HEK293 (cell line): ENCODE measurements at regions of chr1 and their contacts with region 1.

Region 1: DNA sequence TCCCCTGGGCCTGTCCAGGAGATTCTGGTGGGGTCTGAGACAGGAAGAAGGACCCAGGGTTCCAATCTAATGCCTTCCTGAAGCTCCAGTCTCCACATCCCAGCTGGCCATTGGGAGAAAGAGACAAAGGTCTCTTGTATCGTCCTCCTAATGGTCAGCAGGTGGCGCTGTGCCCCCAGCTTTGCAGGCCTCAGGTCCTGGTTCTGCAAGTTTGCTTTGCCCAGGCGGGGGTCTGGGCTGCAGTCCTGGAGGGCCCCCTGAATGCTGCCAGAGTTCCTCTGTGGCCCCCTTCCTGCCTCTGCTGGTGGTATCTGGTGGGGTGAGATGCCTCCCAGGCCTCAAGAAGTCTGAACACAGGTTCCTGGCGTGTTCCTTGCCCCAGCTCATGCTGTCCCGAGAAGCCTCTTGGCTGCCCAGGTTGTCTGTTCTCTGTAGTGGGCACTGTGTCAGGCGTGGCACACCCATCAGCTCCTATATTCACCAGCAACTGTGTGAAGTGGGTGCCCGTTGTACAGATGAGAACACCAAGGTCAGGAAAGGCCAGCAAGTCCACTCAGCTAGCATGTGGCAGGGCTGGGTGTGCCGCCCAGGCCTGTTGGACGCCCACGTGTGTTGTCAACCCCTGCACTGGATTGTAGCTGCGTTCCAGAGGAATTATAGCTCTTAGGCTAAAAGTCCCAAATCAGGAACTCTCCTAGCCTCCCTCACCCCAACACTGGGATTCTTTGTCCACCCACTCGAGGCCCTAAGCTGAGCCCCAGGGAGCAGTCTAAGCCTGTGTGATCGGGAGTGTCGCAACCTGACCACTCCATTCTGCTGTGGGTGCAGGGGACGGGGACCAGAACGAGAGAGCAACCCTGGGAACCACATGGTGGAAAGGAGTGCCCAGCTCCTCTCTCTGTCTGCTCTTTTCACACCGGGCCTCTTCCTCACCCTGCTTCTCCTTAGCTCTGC is 33.9 kb upstream of the CSF3R start:
- H3K4me3 ChIP-seq: no peak overlapping the region
- H3K27ac ChIP-seq: no peak overlapping the region
- H3K4me1 ChIP-seq: no peaks in the 10 kb centered on the region
- CTCF ChIP-seq: peak; percentile 85

Region 2: GRCh38 chr1:36322796-36323596 is 193.7 kb before region 1 on chr1:
- CTCF ChIA-PET with region 1: no interaction called
- POLR2A ChIA-PET with region 1: no interaction called
- H3K4me3 ChIP-seq: peak overlapping the region; percentile 53
- H3K27ac ChIP-seq: peak overlapping the region; percentile 58; the same call in 1 of the 2 replicates
- H3K4me1 ChIP-seq: no peaks in the 10 kb centered on the region; the same call in 1 of the 2 replicates
- CTCF ChIP-seq: no peak

Region 3: GRCh38 chr1:36479505-36480051 is 37.1 kb before region 1 on chr1:
- CTCF ChIA-PET with region 1: interaction called, 11 read pairs
- POLR2A ChIA-PET with region 1: no interaction called
- H3K4me3 ChIP-seq: no peak overlapping the region
- H3K27ac ChIP-seq: no peak overlapping the region
- H3K4me1 ChIP-seq: no peaks in the 10 kb centered on the region
- CTCF ChIP-seq: no peak

Region 4: GRCh38 chr1:36506276-36506920 is 10.3 kb before region 1 on chr1:
- CTCF ChIA-PET with region 1: interaction called, 17 read pairs
- POLR2A ChIA-PET with region 1: no interaction called
- H3K4me3 ChIP-seq: no peak overlapping the region
- H3K27ac ChIP-seq: no peak overlapping the region
- H3K4me1 ChIP-seq: no peaks in the 10 kb centered on the region
- CTCF ChIP-seq: no peak

Region 5: DNA sequence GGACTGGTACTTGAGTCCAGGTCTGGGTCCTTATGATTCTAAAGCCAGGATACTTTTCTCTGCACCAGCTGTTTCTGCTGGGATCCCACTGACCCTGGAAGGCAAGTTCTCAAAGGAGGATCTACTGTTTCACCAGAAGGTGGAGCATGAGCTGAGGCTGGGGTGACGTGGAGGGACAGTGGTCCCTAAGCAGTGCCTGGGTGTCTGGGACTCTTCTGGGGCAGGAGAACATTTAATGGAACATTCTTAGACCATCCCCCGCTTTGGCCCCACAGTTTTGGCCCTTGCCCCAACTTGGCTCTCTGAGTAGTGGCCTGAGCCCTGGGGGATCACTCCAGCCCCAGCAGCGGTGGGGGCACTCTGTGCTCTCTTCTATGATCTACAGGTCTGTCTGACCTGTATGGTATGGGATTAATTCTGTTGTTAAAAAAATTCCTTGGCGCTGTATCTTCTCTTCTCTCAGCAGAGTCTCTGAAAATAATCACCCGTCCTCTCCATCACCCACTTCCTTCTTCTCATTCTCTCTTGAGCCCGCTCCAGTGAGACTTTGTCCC is 26.4 kb after region 1 on chr1:
- CTCF ChIA-PET with region 1: interaction called, 26 read pairs
- POLR2A ChIA-PET with region 1: no interaction called
- H3K4me3 ChIP-seq: no peak overlapping the region
- H3K27ac ChIP-seq: no peak overlapping the region
- H3K4me1 ChIP-seq: no peaks in the 10 kb centered on the region
- CTCF ChIP-seq: peak; percentile 31; the same call in 1 of the 2 replicates

Region 6: DNA sequence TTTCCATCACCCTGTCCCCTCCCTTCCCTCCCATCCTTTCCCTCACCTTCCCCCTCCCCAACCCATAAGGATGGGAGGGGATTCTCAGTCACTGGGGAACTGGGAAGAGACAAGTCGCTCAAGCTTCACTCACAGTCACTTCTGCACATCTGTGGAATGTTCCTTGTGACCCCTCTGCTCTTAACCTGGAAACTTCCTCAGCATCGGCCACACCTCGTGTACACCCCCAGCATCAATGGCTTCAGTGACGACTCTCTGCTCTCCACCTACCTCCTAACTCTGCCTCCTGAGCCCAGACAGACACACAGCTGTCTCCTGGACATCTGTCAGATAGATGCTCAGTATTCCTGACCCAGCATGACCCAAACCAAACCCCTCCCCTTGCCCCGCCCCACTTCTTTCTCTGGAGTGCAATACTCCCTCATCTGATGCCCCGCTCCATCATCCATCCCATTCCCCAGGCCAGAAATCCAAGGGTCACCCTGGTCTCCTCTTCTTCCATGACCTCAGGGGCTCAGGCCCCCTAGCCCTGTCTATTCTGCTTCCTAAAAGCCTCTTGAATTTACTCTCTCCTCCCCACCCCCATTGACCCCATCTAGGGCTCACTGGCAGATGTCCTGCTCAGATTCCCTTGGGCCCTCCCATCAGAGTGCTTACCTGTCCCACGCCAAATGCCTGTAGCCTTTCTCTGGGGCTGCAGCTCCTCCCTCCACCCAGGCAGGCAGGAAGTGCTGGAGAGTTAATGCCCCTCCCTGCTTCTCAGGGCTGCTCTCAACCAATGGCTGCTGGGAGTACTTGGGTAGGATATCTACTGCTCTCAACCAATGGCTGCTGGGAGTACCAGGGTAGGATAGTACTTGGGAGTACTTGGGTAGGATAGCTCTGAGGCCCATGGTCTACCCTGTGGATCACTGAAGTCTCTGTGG is 49.2 kb after region 1 on chr1:
- CTCF ChIA-PET with region 1: interaction called, 13 read pairs
- POLR2A ChIA-PET with region 1: no interaction called
- H3K4me3 ChIP-seq: no peak overlapping the region
- H3K27ac ChIP-seq: no peak overlapping the region
- H3K4me1 ChIP-seq: no peaks in the 10 kb centered on the region
- CTCF ChIP-seq: no peak